ENCODE measurements at regions of chr1 and their contacts with region 1.

Region 1: GRCh38 chr1:111619635-111620440 is at the start of gene RAP1A:
- DNase-seq: peak; percentile 93 to 97 (median 94)
- ATAC-seq: peak; percentile 80
- H3K4me3 ChIP-seq: peak within 1 kb of the TSS; percentile 71 to 87
- H3K4me3 Mint-ChIP-seq: peak within 1 kb of the TSS; percentile 95
- H3K27ac ChIP-seq: peak within 1 kb of the TSS; percentile 66 to 86
- H3K27ac Mint-ChIP-seq: peak within 1 kb of the TSS; percentile 95
- H3K4me1 ChIP-seq: peaks cover 60% of the 10 kb centered on the region
- H3K4me1 Mint-ChIP-seq: peaks cover 70% of the 10 kb centered on the region
- H3K27me3 ChIP-seq: no peaks in the 10 kb centered on the region
- H3K27me3 Mint-ChIP-seq: no peaks in the 10 kb centered on the region
- CTCF ChIP-seq: no peak
- total RNA-seq, gene RAP1A: 63.4 to 68.5 TPM

Region 2: GRCh38 chr1:111570781-111571181 is 49.1 kb before region 1 on chr1:
- CTCF ChIA-PET with region 1: interaction called, 5 read pairs
- POLR2A ChIA-PET with region 1: no interaction called
- intact Hi-C with region 1: loop called in 1 of 2 experiments (anchors 5 kb)
- DNase-seq: peak; percentile 10 to 68 (median 30)
- ATAC-seq: peak; percentile 63
- H3K4me3 ChIP-seq: no peak overlapping the region
- H3K4me3 Mint-ChIP-seq: no peak overlapping the region
- H3K27ac ChIP-seq: no peak overlapping the region
- H3K27ac Mint-ChIP-seq: no peak overlapping the region
- H3K4me1 ChIP-seq: no peaks in the 10 kb centered on the region
- H3K4me1 Mint-ChIP-seq: peaks cover 8% of the 10 kb centered on the region
- H3K27me3 ChIP-seq: no peaks in the 10 kb centered on the region
- H3K27me3 Mint-ChIP-seq: no peaks in the 10 kb centered on the region
- CTCF ChIP-seq: no peak

Region 3: DNA sequence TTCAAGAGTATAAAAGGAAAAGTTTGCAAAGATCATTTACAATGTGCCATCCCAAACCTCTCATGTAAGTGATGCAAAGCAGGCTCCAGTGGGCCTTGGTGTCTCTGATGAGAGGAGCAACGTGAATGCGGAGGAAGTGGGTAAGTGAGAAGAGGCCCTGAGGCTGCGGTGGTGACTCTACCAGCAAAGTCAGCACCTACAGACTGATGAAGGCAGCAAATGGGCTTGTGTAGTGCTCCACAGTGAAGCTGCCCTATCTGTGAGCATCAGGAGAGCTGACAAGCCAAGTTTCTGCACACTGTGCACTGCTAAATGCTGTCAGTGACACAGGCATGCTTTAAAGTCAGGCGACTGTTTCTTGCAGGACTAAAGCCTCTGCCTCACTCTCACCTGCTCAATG is 15.9 kb before region 1 on chr1:
- CTCF ChIA-PET with region 1: interaction called, 10 read pairs
- POLR2A ChIA-PET with region 1: interaction called, 26 read pairs
- intact Hi-C with region 1: loop called (anchors 1 kb)
- DNase-seq: peak; percentile 57 to 91 (median 81)
- ATAC-seq: peak; percentile 96
- H3K4me3 ChIP-seq: no peak overlapping the region
- H3K4me3 Mint-ChIP-seq: peak overlapping the region; percentile 52
- H3K27ac ChIP-seq: peak overlapping the region; percentile 13 to 67
- H3K27ac Mint-ChIP-seq: peak overlapping the region; percentile 89
- H3K4me1 ChIP-seq: peaks cover 51% of the 10 kb centered on the region
- H3K4me1 Mint-ChIP-seq: peaks cover 72% of the 10 kb centered on the region
- H3K27me3 ChIP-seq: no peaks in the 10 kb centered on the region
- H3K27me3 Mint-ChIP-seq: no peaks in the 10 kb centered on the region
- CTCF ChIP-seq: no peak

Region 4: GRCh38 chr1:111639602-111640198 is 19.9 kb after region 1 on chr1:
- CTCF ChIA-PET with region 1: interaction called, 3 read pairs
- POLR2A ChIA-PET with region 1: no interaction called
- intact Hi-C with region 1: loop called in 1 of 2 experiments (anchors 2 kb)
- DNase-seq: no peak
- ATAC-seq: no peak
- H3K4me3 ChIP-seq: no peak overlapping the region
- H3K4me3 Mint-ChIP-seq: no peak overlapping the region
- H3K27ac ChIP-seq: no peak overlapping the region
- H3K27ac Mint-ChIP-seq: peak overlapping the region; percentile 32
- H3K4me1 ChIP-seq: peaks cover 62% of the 10 kb centered on the region
- H3K4me1 Mint-ChIP-seq: peaks cover 78% of the 10 kb centered on the region
- H3K27me3 ChIP-seq: no peaks in the 10 kb centered on the region
- H3K27me3 Mint-ChIP-seq: no peaks in the 10 kb centered on the region
- CTCF ChIP-seq: no peak

Region 5: GRCh38 chr1:111656086-111657017 is 36.5 kb after region 1 on chr1:
- CTCF ChIA-PET with region 1: interaction called, 3 read pairs
- POLR2A ChIA-PET with region 1: interaction called, 4 read pairs
- intact Hi-C with region 1: loop called (anchors 5 kb)
- DNase-seq: peak in 2 of 9 experiments; percentile 57 to 68
- ATAC-seq: no peak
- H3K4me3 ChIP-seq: no peak overlapping the region
- H3K4me3 Mint-ChIP-seq: no peak overlapping the region
- H3K27ac ChIP-seq: no peak overlapping the region
- H3K27ac Mint-ChIP-seq: peak overlapping the region; percentile 33
- H3K4me1 ChIP-seq: peaks cover 63% of the 10 kb centered on the region
- H3K4me1 Mint-ChIP-seq: peaks cover 53% of the 10 kb centered on the region
- H3K27me3 ChIP-seq: no peaks in the 10 kb centered on the region
- H3K27me3 Mint-ChIP-seq: no peaks in the 10 kb centered on the region
- CTCF ChIP-seq: peak; percentile 62